Activated naive CD8-positive, alpha-beta T cell treated with anti-CD3 and anti-CD28 coated beads, Interleukin-2, amount 10 ng/mL, durations not matched to agents 7 days and 5 days (primary cell): ENCODE measurements at regions of chr16 and their contacts with region 1.

Region 1: DNA sequence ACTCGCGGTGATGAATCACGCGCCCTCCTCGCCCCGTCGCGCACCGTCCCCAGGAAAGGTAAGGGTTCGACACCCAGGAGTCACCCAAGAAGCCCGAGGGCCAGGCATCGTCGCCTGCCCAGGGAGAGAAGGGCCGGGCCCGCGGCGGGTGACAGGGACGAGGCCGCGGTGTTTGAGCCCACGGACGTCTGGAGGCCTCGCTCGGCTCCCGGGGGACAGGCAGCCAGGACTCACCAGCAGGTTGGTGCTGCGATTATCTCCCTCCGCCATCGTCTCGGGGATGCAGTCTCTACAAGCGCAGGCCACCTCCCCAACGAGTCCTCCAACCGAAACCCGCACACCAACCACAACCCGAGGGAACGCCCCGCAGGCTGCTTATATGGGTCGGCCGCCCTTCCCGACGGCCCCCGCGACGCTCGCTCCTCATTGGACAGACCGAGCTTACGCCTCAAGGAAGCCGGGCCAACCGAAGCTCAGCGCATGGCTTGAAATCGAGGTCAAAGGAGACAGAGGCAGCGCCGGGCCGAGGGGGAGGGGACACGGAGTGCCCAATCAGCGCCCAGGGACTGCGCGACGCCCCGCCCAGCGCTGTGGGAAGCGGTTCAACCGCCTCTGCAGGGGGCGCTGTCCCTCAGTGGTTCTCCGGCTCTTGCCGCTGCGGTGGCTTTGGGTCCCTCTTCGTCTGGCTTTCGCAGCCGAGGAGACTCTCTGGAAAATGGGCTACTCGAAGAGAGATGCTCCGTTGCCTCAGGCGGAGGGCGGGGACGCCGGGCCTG is at the start of gene ARL6IP1:
- DNase-seq: peak; percentile 99
- ATAC-seq: peak; percentile 96
- H3K4me3 Mint-ChIP-seq: peak within 1 kb of the TSS; percentile 99
- H3K27ac Mint-ChIP-seq: peak within 1 kb of the TSS; percentile 98
- H3K4me1 Mint-ChIP-seq: peaks cover 46% of the 10 kb centered on the region
- H3K27me3 Mint-ChIP-seq: no peaks in the 10 kb centered on the region
- total RNA-seq, gene ARL6IP1: 176 to 182 TPM

Region 2: GRCh38 chr16:18789850-18790724 is 11.3 kb before region 1 on chr16 and contains the start of gene RPS15A:
- POLR2A ChIA-PET with region 1: interaction called, 214 read pairs
- DNase-seq: peak; percentile 86
- ATAC-seq: peak; percentile 93
- H3K4me3 Mint-ChIP-seq: peak within 1 kb of the TSS; percentile 96
- H3K27ac Mint-ChIP-seq: peak within 1 kb of the TSS; percentile 94
- H3K4me1 Mint-ChIP-seq: peaks cover 46% of the 10 kb centered on the region
- H3K27me3 Mint-ChIP-seq: no peaks in the 10 kb centered on the region
- total RNA-seq, gene RPS15A: 1,969 to 2,023 TPM

Region 3: GRCh38 chr16:18816286-18816685 is 14.9 kb after region 1 on chr16:
- POLR2A ChIA-PET with region 1: interaction called, 15 read pairs
- DNase-seq: no peak
- ATAC-seq: no peak
- H3K4me3 Mint-ChIP-seq: no peak overlapping the region
- H3K27ac Mint-ChIP-seq: no peak overlapping the region
- H3K4me1 Mint-ChIP-seq: peaks cover 4% of the 10 kb centered on the region
- H3K27me3 Mint-ChIP-seq: no peaks in the 10 kb centered on the region

Region 4: GRCh38 chr16:18829251-18829650 is 27.9 kb after region 1 on chr16:
- POLR2A ChIA-PET with region 1: interaction called, 20 read pairs
- DNase-seq: no peak
- ATAC-seq: no peak
- H3K4me3 Mint-ChIP-seq: no peak overlapping the region
- H3K27ac Mint-ChIP-seq: no peak overlapping the region
- H3K4me1 Mint-ChIP-seq: peaks cover 2% of the 10 kb centered on the region
- H3K27me3 Mint-ChIP-seq: no peaks in the 10 kb centered on the region

Region 5: GRCh38 chr16:18959031-18959505 is 157.7 kb after region 1 on chr16:
- POLR2A ChIA-PET with region 1: no interaction called
- DNase-seq: no peak
- ATAC-seq: no peak
- H3K4me3 Mint-ChIP-seq: no peak overlapping the region
- H3K27ac Mint-ChIP-seq: no peak overlapping the region
- H3K4me1 Mint-ChIP-seq: no peaks in the 10 kb centered on the region
- H3K27me3 Mint-ChIP-seq: peaks cover 21% of the 10 kb centered on the region

Region 6: DNA sequence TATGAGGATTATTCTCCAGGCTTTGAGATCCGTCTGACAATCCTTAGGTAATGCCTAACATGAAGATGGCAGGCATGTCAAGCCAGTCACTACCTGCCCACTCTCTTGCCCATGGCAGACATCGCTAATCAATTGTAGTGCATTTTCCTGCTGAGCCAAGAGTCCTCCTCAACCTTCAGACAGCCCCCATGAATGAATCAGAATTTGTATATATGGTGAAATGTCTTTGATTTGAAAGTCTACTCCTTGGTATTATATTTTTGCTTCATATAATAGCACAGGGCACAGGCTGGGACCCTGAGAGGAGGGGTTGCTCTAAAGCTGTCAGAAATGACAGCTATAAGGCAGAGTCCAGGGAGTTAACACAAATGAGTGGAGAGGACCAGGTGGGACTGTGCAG is 239.0 kb after region 1 on chr16:
- POLR2A ChIA-PET with region 1: no interaction called
- DNase-seq: no peak
- ATAC-seq: no peak
- H3K4me3 Mint-ChIP-seq: no peak overlapping the region
- H3K27ac Mint-ChIP-seq: no peak overlapping the region
- H3K4me1 Mint-ChIP-seq: no peaks in the 10 kb centered on the region
- H3K27me3 Mint-ChIP-seq: no peaks in the 10 kb centered on the region

Region 7: DNA sequence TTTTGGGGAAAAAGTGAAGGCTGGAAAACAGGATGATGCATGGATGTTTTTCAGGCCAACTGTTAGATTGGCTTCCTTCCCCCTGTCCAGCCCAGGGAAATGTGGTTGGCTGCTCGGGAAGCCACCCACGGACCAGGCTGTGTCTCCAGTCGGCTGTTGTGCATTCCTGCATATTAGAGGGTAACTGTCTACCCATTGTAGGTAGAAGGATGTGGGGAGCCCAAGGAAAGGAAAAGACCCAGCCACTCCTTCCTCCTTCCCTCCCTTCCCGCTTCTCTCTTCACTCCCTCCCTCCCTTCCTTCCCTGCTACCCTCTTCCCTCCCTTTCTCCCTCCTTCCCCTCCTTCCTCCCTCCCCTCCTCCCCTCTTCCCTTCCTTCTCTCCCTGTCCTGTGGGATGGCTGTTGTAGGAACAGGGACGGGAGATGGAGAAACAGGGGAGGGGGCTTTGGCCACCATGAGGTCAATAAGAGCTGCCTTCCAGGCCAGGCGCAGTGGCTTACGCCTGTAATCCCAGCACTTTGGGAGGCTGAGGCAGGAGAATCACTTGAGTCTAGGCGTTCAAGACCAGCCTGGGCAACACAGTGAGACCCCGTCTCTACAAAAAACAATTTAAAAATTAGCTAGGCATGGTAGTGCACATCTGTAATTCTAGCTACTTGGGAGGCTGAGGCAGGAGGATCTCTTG is 383.6 kb after region 1 on chr16:
- POLR2A ChIA-PET with region 1: no interaction called
- DNase-seq: no peak
- ATAC-seq: no peak
- H3K4me3 Mint-ChIP-seq: no peak overlapping the region
- H3K27ac Mint-ChIP-seq: no peak overlapping the region
- H3K4me1 Mint-ChIP-seq: no peaks in the 10 kb centered on the region
- H3K27me3 Mint-ChIP-seq: peaks cover 3% of the 10 kb centered on the region